Right ventricle myocardium inferior (tissue), 1 donor: ENCODE measurements at regions of chr3 and their contacts with region 1.

Region 1: DNA sequence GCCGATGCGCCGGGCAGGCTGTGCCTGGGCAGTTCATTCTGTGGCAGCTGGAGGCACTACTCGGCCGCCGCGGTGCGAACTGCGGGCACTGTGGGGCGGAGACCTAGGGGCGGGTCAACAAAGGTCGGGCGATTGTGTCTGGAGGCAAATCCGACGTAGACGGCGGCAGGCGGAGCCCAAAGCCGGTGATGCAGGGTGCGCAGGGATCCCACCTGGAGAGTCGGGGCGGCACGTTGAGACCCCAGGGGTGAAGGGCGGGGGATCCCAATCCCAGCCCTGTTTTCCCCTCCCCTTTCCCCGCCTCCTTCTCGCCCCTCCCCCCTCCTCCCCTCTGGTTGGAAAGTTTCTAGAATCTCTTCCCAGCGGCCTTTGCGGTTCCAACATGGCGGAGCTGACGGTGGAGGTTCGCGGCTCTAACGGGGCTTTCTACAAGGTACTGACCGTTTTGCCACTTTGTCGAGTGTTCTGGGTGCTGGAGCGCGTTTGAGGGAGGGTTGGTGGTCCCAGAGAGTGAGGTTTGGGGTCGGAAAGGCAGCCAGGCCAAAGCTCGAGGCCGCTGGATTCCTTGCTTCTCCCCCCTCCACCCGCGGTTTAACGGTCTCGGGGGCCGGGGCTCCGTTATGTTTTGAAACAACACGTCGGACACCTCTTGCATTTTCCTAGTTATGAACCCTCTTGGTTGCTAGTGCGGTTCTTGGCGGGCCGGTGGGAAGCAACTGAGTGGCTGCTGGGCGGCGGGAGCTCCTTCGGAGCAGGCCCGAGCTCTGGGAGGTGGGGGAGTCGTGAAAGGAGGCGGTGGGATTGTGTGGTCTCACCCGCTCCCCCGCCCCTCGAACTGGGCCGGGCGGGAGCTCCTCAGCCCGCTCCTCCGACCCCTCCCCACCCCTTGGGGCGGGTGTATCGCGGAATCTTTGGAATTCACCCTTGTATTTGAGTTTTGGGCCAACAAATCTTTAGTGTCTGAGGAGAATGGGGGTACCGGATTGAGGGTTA is at the start of gene FXR1:
- DNase-seq: peak; percentile 96
- ATAC-seq: peak; percentile 99
- total RNA-seq, gene FXR1: 286 TPM

Region 2: DNA sequence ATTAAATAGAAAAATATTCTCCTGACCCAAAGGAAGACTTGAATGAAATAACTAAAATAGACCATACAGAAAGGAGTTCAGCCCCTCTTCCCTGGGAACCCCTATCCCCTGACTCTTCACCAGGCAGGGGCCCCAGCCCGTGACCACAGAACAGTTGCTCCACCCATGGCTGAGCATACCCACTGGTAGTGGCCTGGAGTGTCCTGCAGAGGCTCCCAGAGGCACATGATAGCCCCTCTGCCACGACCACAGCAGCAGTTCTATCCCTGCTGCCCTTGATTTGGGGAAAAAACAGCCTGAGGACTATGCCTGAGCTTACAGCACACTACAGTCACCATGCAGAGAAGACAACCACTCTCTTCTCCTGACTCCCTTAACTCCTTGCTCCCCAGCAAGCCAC is 278.9 kb before region 1 on chr3:
- intact Hi-C with region 1: no loop called
- DNase-seq: no peak
- ATAC-seq: no peak

Region 3: GRCh38 chr3:180870008-180870699 is 42.4 kb before region 1 on chr3:
- intact Hi-C with region 1: loop called (anchors 5 kb)
- DNase-seq: peak; percentile 70
- ATAC-seq: peak; percentile 78

Region 4: GRCh38 chr3:180989291-180990163 is 76.9 kb after region 1 on chr3 and contains the start of gene DNAJC19:
- intact Hi-C with region 1: loop called (anchors 2 kb)
- DNase-seq: peak; percentile 92
- ATAC-seq: peak; percentile 99
- total RNA-seq, gene DNAJC19: 114 TPM